ENCODE measurements at regions of chr2 and their contacts with region 1.

Region 1: DNA sequence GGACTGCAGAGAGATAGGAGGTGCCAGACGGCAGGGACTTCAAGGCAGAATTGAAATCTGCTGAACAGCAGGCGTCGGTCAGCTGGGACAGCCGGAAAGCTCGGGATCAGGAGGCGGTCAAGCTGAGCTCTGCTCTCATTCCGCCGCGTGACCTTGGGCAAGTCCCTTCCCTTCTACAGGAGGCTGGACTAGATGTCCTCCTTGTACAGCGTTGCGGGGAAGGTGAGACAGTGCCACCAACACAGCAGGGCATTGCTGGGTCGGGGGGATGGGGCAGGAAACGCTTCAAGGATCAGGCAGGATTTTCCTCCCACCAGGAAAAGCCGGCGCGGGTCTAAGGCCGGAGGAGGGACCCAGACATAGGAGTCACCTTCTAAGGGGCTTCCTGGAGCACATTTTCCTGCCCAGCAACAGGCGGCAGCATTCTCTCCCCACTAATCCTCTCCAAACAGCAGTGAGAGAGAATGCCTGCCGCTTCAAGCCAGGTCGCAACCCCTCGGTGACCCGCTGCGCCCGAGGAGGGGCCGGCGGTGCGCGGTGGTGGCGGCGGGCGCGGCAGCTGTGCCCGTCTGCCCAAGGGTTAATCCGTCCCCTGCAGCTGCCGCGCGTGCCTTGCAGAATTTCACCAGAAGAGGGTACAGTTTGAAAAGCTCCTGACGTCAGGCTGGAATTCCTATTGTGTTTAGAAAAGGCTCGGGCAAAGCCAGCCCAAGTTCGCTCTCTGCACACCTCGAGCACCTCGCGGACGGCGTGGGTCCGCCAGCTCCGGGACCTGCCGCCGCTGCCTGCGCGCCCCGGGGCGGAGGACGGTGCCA is at the start of gene KCNF1:
- DNase-seq: no peak
- ATAC-seq: peak; percentile 57
- H3K4me3 ChIP-seq: peak within 1 kb of the TSS; percentile 33 to 49
- H3K27ac ChIP-seq: no peak within 1 kb of the TSS
- H3K4me1 ChIP-seq: no peaks in the 10 kb centered on the region
- H3K27me3 ChIP-seq: peaks cover 10% of the 10 kb centered on the region
- CTCF ChIP-seq: peak; percentile 51; the same call in 1 of the 2 replicates
- total RNA-seq, gene KCNF1: 0.39 TPM

Region 2: GRCh38 chr2:10584796-10585475 is 326.5 kb before region 1 on chr2:
- CTCF ChIA-PET with region 1: no interaction called
- POLR2A ChIA-PET with region 1: no interaction called
- in situ Hi-C with region 1: no loop called
- intact Hi-C with region 1: no loop called
- DNase-seq: no peak
- ATAC-seq: no peak
- H3K4me3 ChIP-seq: no peak overlapping the region
- H3K27ac ChIP-seq: no peak overlapping the region
- H3K4me1 ChIP-seq: no peaks in the 10 kb centered on the region
- H3K27me3 ChIP-seq: no peaks in the 10 kb centered on the region
- CTCF ChIP-seq: no peak

Region 3: GRCh38 chr2:10846110-10846861 is 65.2 kb before region 1 on chr2:
- CTCF ChIA-PET with region 1: no interaction called
- POLR2A ChIA-PET with region 1: interaction called, 10 read pairs
- in situ Hi-C with region 1: no loop called
- intact Hi-C with region 1: no loop called
- DNase-seq: no peak
- ATAC-seq: 0 out of 2 replicates have a peak, but pooled peaks have one; percentile 13
- H3K4me3 ChIP-seq: no peak overlapping the region
- H3K27ac ChIP-seq: no peak overlapping the region
- H3K4me1 ChIP-seq: no peaks in the 10 kb centered on the region
- H3K27me3 ChIP-seq: no peaks in the 10 kb centered on the region; the same call in 1 of the 2 replicates
- CTCF ChIP-seq: no peak

Region 4: DNA sequence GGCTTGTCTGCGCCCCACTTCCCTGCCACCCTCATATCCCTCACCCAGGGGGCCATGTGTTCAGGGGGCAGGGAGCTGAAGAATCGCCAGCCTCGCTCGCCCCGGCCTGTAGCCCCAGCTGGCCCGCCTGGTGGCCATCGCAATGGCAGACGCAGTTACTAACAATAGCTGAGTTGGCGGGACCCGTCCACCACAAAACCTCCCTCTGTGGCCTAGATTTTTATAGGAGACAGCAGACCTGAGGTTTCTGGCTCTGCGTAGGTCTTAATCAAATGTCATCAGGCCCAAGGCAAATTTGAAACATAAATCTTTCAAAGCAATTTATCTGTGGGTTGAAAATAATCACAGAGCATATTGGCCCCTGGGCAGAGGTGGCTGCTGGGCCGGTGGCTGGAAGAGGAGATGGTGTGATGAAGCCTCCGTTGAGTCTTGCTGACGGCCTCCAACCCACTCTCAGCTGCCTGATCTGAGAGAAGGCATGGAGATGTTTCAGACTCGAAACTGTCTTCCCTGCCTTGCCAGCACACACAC is 30.9 kb after region 1 on chr2:
- CTCF ChIA-PET with region 1: no interaction called
- POLR2A ChIA-PET with region 1: no interaction called
- in situ Hi-C with region 1: no loop called
- intact Hi-C with region 1: no loop called
- DNase-seq: no peak
- ATAC-seq: no peak
- H3K4me3 ChIP-seq: no peak overlapping the region
- H3K27ac ChIP-seq: no peak overlapping the region
- H3K4me1 ChIP-seq: no peaks in the 10 kb centered on the region
- H3K27me3 ChIP-seq: no peaks in the 10 kb centered on the region
- CTCF ChIP-seq: no peak

Region 5: GRCh38 chr2:11133238-11133935 is 221.9 kb after region 1 on chr2:
- CTCF ChIA-PET with region 1: no interaction called
- POLR2A ChIA-PET with region 1: no interaction called
- in situ Hi-C with region 1: no loop called
- intact Hi-C with region 1: no loop called
- DNase-seq: no peak
- ATAC-seq: no peak
- H3K4me3 ChIP-seq: peak overlapping the region; percentile 31 to 38
- H3K27ac ChIP-seq: peak overlapping the region; percentile 55
- H3K4me1 ChIP-seq: peaks cover 10% of the 10 kb centered on the region
- H3K27me3 ChIP-seq: no peaks in the 10 kb centered on the region; the same call in 1 of the 2 replicates
- CTCF ChIP-seq: no peak

Region 6: GRCh38 chr2:11175293-11175795 is 263.9 kb after region 1 on chr2:
- CTCF ChIA-PET with region 1: no interaction called
- POLR2A ChIA-PET with region 1: no interaction called
- in situ Hi-C with region 1: no loop called
- intact Hi-C with region 1: no loop called
- DNase-seq: no peak
- ATAC-seq: no peak
- H3K4me3 ChIP-seq: no peak overlapping the region
- H3K27ac ChIP-seq: no peak overlapping the region
- H3K4me1 ChIP-seq: no peaks in the 10 kb centered on the region
- H3K27me3 ChIP-seq: no peaks in the 10 kb centered on the region
- CTCF ChIP-seq: no peak

Measured in Panc1 (cell line).